ENCODE measurements at regions of chr3 and their contacts with region 1.

Region 1: GRCh38 chr3:128123538-128124368 is at the start of gene RUVBL1:
- DNase-seq: peak; percentile 99
- H3K4me3 ChIP-seq: peak within 1 kb of the TSS; percentile 62 to 95 (median 74)
- H3K27ac ChIP-seq: peak within 1 kb of the TSS; percentile 71 to 85 (median 76)
- H3K4me1 ChIP-seq: peaks cover 0 to 15% (median 11%) of the 10 kb centered on the region in 4 donors
- H3K27me3 ChIP-seq: no peaks in the 10 kb centered on the region
- CTCF ChIP-seq: no peak
- EP300 ChIP-seq: peak in 2 of 4 donors; percentile 13 to 77
- POLR2A ChIP-seq: peak in 1 of 2 donors; percentile 9
- total RNA-seq, gene RUVBL1: 16.3 to 20.9 (median 17.1) TPM

Region 2: GRCh38 chr3:127791211-127791946 is 332.4 kb before region 1 on chr3:
- intact Hi-C with region 1: no loop called
- DNase-seq: peak; percentile 80
- H3K4me3 ChIP-seq: no peak overlapping the region
- H3K27ac ChIP-seq: peak overlapping the region; percentile 77 to 95 (median 94)
- H3K4me1 ChIP-seq: peaks cover 0 to 77% (median 68%) of the 10 kb centered on the region in 4 donors
- H3K27me3 ChIP-seq: no peaks in the 10 kb centered on the region
- CTCF ChIP-seq: peak in 3 of 4 experiments; percentile 17 to 25 (median 25)
- EP300 ChIP-seq: no peak
- POLR2A ChIP-seq: no peak

Region 3: GRCh38 chr3:128153156-128154041 is 29.6 kb after region 1 on chr3 and contains the start of gene EEFSEC:
- intact Hi-C with region 1: loop called (anchors 2 kb)
- DNase-seq: peak; percentile 91
- H3K4me3 ChIP-seq: peak within 1 kb of the TSS; percentile 78 to 93 (median 88)
- H3K27ac ChIP-seq: peak within 1 kb of the TSS; percentile 90 to 93 (median 90)
- H3K4me1 ChIP-seq: peaks cover 0 to 12% (median 8%) of the 10 kb centered on the region in 4 donors
- H3K27me3 ChIP-seq: no peaks in the 10 kb centered on the region
- CTCF ChIP-seq: no peak
- EP300 ChIP-seq: no peak
- POLR2A ChIP-seq: peak in 1 of 2 donors; percentile 32
- total RNA-seq, gene EEFSEC: 8.6 to 16.1 (median 12.9) TPM